ENCODE measurements at regions of chr7 and their contacts with region 1.

Region 1: DNA sequence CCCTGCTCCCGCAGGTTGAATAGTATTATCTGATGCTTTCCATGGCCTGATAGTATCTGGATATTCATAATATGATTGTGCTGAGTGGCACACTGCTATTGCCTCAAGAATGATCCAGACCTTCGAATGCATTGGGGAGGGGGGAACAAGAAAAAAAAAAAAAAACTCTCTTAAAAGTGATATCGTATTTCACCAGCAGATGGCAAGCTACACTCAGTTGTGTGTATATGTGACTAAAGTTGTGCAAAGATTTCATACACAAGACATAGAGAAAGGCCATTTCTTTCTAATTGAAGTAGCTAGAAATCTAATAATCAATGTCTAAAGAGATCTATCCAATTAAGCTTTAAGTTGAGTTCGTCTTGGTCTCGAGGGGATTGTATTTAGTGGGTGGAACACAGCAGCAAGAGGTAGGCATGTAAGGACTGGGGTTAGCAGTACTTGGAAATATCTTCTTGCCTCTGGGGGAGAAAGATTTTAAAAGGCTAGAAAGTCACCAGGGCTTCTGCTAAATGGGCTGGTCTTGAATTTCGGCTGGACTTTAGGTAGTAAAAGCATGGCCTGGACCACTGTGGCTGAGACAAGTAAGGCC is 15.3 kb downstream of the SFRP4 start:
- DNase-seq: no peak

Region 2: GRCh38 chr7:38215735-38216670 is 314.7 kb after region 1 on chr7:
- intact Hi-C with region 1: loop called (anchors 10 kb)
- DNase-seq: peak; percentile 53 to 93 (median 78)

Region 3: DNA sequence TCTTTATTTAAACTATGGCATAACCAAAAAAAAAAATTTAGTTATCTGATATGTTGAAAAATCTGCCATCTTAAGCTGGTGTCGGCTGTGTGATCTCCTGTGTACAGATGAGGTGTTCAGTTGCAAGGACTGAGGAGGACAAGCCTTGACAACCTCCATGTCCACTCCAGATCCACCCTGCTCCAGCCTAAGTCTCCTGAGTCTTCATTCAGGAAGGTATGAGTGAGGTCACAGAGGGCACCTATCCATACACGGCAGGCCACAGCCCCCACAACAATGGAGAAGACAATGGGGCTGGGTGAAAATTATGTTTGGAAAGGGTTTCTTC is 356.0 kb after region 1 on chr7:
- intact Hi-C with region 1: no loop called
- DNase-seq: no peak

Region 4: DNA sequence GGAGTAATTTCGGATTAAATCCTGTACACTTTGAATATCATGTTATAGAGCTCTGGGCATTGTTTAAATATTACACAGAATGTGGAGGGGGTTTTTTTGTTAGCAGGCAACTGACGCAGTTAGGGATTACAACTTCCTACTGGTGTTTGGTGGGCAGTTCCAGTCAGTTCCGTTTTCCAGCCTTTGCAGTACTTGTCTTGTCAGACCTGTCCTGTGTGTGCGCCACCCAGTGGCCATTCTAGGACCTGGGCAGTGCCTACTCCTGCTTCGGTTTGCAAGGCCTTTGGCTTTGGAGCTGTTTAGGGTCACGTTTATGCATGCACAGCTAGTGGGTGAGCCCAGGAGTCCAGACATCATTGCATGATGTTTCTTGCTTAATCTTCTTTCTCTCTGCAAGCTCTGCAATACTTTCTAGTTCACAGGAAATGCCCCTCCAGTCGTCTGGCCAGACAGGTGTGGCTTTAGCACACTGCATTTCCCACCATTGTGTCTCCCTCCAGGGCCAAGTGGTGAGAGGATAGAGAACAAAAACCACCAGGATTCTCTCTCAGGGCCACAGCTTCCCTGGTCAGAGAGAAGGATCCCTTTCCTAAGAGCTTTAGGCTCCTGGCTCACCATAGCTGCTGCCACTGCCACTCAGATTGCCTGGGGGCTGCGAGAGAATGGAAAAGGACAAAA is 468.6 kb after region 1 on chr7:
- intact Hi-C with region 1: loop called (anchors 10 kb)
- DNase-seq: peak; percentile 64 to 94 (median 88)

Measured in head of caudate nucleus (tissue), 42 donors.